ENCODE measurements at regions of chr13 and their contacts with region 1.

Region 1: GRCh38 chr13:31803311-31803710 is 64.0 kb downstream of the RXFP2 start:
- DNase-seq: no peak

Region 2: DNA sequence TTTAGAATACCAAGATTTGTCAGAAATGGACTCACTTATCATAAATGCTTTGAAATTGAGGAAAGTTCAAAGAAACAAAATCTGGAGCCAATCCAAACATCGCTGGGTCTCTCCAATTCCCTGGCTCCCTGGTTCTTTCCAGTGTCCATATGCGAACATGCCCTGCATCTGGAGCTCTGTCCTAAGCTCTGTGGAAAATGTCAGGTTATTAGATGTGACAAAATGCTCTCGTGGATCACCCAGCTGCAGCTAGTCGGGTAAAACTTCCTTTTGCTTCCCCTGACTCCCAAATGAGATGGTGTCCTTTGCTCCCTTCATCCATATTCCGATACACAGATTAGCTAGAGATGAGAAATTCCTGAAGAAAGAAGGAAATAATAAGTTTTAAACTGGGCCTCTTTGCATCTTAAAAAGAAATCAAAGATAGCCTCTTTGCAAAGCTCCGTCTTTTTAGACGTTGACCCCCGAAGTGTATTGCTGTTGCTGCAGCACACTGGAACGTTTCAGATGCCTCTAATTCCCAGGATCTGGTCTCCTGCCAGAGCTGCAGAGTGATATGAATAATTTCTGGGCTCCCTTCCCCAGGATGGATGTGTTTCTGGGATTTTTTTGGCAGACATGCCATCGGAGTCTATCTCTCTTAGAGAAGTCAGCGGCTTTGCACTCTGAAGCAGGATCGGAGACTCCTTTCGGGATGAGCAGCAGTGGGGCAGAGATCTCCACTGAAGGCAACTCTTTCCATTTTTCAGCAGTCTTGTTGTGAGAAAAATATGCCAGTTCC is 767.9 kb before region 1 on chr13:
- intact Hi-C with region 1: no loop called
- DNase-seq: peak in 1 of 10 donors; percentile 46

Region 3: DNA sequence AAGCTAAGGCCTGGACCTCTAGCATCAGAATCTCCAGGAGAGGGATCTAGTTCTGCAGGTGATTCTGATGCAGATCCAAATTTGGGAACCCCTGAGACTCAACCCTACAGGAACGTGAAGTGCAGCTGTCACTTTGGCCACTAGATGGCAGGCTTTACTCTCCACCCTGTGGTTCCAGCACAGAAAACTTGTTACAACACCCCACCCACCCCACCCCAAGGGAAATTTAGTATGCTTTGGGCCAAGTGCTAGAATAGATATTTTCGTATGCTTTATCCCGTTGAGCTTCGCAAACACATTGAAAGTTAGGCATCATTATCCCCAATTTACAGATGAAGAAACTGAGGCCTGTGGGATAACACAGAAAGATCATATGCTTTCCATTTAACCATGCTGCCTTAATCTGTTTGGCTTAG is 371.6 kb before region 1 on chr13:
- intact Hi-C with region 1: loop called (anchors 2 kb)
- DNase-seq: peak in 6 of 10 donors; percentile 14 to 80 (median 39)

Region 4: GRCh38 chr13:32491028-32491427 is 687.7 kb after region 1 on chr13:
- intact Hi-C with region 1: no loop called
- DNase-seq: no peak

Measured in posterior cingulate gyrus (tissue), 11 donors.